Activated T-helper 1 cell treated with anti-CD3 and anti-CD28 coated beads, Interleukin-12 subunit alpha, Interleukin-12 subunit beta, Interleukin-2, Interleukin-4 antibody, amounts not matched to agents 30 ng/mL and 10 ng/mL and 1 ng/mL, durations not matched to agents 14 hours and 24 hours and 36 hours (primary cell): ENCODE measurements at regions of chr4 and their contacts with region 1.

Region 1: DNA sequence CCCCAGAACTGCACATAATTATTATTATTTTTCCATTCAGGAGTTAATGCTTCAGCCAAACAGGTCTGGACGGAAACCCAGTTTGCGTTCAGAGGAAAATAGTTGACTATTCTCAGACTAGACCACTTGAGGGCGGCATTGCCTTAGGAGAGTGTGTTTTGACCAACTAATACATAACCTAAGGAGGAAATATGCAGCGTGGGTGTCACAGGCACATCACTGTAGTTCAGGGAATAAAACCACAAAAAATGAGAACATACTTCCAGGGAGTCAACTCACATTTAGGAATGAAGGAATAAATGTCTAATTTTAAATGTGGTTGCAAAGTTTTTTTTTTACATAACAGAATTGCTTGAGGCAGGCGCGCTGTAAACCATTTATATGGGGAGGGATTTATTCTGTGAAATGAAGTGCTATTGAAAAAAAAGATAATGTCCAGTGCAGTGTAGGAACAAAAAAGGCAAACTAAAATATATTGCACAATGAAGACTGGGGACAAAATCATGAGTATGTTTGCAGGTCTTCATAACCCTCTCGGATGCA is 93.3 kb downstream of the SYNPO2 start:
- DNase-seq: peak; percentile 20
- H3K4me3 Mint-ChIP-seq: no peak overlapping the region
- H3K27ac Mint-ChIP-seq: no peak overlapping the region
- H3K4me1 Mint-ChIP-seq: no peaks in the 10 kb centered on the region
- H3K27me3 Mint-ChIP-seq: peaks cover 4% of the 10 kb centered on the region

Region 2: DNA sequence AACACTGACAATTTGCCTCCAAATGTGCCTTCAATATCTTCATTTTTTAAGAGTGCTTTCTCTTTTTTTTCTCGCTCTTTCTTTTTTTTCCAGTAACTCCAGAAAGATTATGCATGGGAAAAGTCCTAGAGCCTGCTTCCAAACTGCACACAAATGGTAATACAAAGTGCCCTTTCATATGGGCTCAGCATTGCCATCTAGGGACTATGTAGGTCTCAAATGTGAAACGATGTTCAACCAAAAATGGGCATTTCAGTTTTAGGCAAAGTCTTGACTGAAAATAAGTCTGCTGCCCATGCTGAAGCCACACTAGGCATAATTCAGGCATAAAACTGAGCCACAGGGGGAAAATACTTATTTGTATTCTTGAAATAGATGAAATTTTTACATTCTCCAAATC is 27.7 kb before region 1 on chr4:
- intact Hi-C with region 1: no loop called
- DNase-seq: no peak
- H3K4me3 Mint-ChIP-seq: no peak overlapping the region
- H3K27ac Mint-ChIP-seq: no peak overlapping the region
- H3K4me1 Mint-ChIP-seq: no peaks in the 10 kb centered on the region
- H3K27me3 Mint-ChIP-seq: peaks cover 6% of the 10 kb centered on the region

Region 3: DNA sequence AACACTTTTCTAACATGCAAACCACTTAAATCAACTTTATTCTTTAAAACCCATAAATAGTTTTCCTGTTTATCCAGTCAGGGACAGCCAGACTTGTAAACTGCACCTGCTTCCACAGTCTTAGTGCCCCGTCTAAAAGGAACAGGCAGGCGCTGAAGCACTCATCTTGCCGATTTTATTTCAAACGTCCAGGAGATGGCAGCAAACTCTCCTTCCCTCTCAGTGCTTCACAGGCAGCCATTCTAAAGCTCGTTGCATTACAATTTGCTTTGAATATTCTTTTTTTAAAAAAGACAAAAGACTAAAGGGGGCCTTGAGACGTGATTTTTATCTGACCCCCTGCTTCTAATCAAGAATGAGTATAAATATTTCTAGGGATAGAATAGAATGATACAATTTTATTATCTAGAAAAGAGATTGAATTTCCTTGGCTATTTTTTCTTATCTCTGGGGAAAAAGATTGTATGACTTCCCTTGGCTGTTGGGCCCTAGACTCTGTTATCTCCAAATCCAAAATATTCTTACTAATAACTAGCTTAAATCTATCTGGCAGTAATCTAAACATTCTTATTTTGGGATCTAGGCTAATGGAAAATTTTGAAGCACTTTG is 60.1 kb after region 1 on chr4:
- intact Hi-C with region 1: loop called (anchors 1 kb)
- DNase-seq: peak; percentile 40
- H3K4me3 Mint-ChIP-seq: no peak overlapping the region
- H3K27ac Mint-ChIP-seq: no peak overlapping the region
- H3K4me1 Mint-ChIP-seq: peaks cover 6% of the 10 kb centered on the region
- H3K27me3 Mint-ChIP-seq: no peaks in the 10 kb centered on the region

Region 4: DNA sequence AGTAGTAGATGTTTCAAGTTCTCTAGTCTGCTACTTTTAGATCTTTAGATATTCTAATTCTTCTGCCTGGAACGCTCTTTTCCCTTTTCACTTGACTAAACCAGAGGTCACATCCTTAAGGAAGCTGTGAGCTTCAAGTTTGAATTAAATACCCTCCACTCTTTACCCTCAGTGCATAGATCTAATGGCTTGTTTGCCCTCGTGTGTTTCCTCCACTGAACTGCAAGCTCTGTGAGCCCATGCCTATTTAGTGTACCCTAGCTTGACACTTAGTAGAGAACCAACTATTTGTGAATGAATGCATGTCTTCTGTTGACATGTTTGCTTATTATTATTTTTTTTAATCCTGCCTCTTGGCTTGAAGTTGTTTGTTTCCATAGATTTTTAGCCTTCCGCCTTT is 508.4 kb after region 1 on chr4:
- intact Hi-C with region 1: loop called (anchors 10 kb)
- DNase-seq: no peak
- H3K4me3 Mint-ChIP-seq: no peak overlapping the region
- H3K27ac Mint-ChIP-seq: no peak overlapping the region
- H3K4me1 Mint-ChIP-seq: no peaks in the 10 kb centered on the region
- H3K27me3 Mint-ChIP-seq: no peaks in the 10 kb centered on the region